ENCODE measurements at regions of chr11 and their contacts with region 1.

Region 1: GRCh38 chr11:8033305-8034105 is 46.4 kb downstream of the EIF3F start:
- DNase-seq: no peak
- H3K4me3 ChIP-seq: no peak overlapping the region
- H3K27me3 ChIP-seq: no peaks in the 10 kb centered on the region
- CTCF ChIP-seq: peak; percentile 93

Region 2: GRCh38 chr11:7612661-7613393 is 420.7 kb before region 1 on chr11:
- CTCF ChIA-PET with region 1: no interaction called
- POLR2A ChIA-PET with region 1: no interaction called
- DNase-seq: no peak
- H3K4me3 ChIP-seq: no peak overlapping the region
- H3K27me3 ChIP-seq: no peaks in the 10 kb centered on the region
- CTCF ChIP-seq: no peak

Region 3: DNA sequence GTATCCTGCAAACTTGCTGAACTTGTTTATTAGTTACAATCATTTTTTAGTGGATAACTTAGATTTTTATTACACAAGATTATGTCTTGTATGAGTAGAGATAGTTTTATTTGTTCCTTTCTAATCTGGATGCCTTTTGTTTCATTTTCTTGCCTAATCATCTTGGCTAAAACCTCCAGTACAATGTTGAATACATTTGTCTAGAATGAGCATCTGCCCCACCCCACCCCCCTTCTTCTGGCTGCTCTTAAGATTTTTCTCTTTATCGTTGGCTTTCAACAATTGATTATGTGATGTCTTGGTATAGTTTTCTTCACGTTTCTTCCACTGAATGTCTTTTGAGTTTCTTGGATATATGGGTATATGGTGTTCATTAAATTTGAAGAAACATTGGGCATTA is 10.3 kb after region 1 on chr11:
- CTCF ChIA-PET with region 1: interaction called, 13 read pairs
- POLR2A ChIA-PET with region 1: no interaction called
- DNase-seq: no peak
- H3K4me3 ChIP-seq: no peak overlapping the region
- H3K27me3 ChIP-seq: no peaks in the 10 kb centered on the region
- CTCF ChIP-seq: no peak

Region 4: DNA sequence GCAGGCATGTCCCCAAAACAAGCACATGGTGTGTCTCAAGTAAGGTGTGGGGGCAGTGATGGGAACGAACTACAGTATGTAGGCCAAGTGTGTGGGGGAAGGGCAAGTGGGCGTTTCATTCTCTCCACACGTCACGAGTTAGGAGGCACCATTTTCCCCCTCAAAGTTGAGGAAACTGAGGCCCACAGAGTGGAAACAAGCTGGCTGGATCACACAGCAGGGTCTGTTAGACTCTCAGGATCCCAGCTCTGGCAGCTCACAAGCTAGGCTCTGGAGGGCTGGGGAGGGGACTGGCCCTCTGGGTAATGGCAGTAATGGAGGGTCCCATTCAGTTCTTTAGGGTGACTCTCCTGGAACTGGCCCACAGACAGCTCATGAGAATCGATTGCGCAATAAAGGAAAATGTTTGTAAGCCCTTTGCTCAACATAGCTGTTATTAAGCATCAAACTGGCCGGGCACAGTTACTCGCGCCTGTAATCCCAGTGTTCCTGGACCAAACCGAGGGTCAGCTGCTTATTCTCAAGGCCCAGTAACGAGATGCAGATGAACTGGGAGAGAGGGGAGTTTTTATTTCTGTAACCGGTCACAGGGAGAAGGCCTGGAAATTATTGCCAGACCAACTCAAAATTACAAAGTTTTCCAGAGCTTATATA is 23.4 kb after region 1 on chr11:
- CTCF ChIA-PET with region 1: interaction called, 16 read pairs
- POLR2A ChIA-PET with region 1: no interaction called
- DNase-seq: peak; percentile 35
- H3K4me3 ChIP-seq: no peak overlapping the region
- H3K27me3 ChIP-seq: no peaks in the 10 kb centered on the region
- CTCF ChIP-seq: no peak

Region 5: DNA sequence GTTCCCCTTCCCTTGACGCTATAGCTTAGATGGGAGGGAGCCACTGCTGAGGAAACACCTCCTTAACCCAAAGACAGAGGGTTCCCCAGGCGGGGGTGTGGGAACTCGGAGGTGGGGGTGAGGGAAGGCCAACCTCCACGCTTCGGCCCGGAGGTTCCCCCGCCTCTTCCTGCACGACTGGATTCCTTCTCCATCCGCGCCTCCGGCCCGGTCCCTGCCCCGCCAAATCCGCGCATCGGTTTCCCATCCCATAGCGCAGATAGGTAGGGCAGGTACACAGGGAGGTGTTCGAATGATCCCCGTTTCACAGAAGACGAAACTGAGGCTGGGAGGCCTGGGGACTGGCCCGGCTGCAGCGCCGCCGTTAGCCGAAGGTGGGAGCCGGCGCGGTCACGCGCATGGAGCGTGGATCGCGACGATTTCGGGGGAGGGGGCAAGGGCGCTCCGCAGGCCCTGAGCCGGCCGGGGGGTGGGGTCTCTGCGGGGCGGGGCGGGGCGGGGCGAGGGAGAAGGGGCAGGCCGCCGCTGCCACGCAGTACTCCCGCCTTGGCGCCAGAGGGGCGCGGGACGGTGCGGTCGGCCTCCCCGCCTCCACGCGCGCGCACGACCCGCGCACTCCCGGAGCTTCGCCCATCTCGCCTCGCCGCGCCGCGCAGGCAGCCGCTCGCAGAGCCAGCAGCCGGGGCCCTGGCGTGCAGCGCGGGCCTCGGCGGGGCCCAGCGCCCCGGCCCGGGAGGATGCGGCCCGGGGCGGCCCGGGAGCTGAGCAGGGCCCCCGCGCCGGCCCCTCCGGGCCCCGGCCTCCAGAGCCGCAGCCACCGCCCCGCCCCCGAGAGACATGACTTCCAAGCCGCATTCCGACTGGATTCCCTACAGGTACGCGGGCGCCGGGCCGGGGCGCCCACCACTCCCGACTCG is 47.4 kb after region 1 on chr11 and contains the start of gene TUB:
- CTCF ChIA-PET with region 1: interaction called, 441 read pairs
- POLR2A ChIA-PET with region 1: no interaction called
- DNase-seq: no peak
- H3K4me3 ChIP-seq: peak within 1 kb of the TSS; percentile 62
- H3K27me3 ChIP-seq: no peaks in the 10 kb centered on the region; the same call in 1 of the 2 replicates
- CTCF ChIP-seq: 0 out of 2 replicates have a peak, but pooled peaks have one; percentile 13
- polyA plus RNA-seq, gene TUB: 9.8 and 11.8 TPM in 2 replicates

Measured in BJ (cell line).